ENCODE measurements at regions of chr2 and their contacts with region 1.

Region 1: DNA sequence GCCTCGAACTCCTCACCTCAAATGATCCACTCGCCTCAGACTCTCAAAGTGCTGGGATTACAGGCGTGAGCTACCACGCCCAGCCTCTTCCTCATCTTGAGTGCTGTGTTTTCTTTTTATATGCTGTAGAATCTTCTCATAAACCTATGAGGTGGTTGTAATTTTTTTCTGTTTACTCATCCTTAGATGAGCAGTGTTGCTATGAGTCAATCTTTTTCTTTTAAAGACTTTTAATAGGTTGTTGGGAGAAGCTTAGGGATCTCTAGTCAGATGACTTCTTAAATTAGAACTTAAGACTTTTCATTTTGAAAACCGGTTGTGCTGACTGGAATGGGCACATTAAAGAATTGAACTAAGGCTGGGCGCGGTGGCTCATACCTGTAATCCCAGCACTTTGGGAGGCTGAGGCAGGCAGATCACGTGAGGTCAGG is 8.7 kb upstream of the AAK1 start:
- DNase-seq: peak; percentile 95
- ATAC-seq: peak; percentile 97
- H3K4me3 ChIP-seq: no peak overlapping the region
- H3K27ac ChIP-seq: peak overlapping the region; percentile 83
- H3K4me1 ChIP-seq: peaks cover 20% of the 10 kb centered on the region
- H3K27me3 ChIP-seq: no peaks in the 10 kb centered on the region
- CTCF ChIP-seq: no peak

Region 2: GRCh38 chr2:69667805-69668382 is 15.7 kb after region 1 on chr2:
- CTCF ChIA-PET with region 1: no interaction called
- POLR2A ChIA-PET with region 1: no interaction called
- intact Hi-C with region 1: loop called (anchors 1 kb)
- DNase-seq: peak; percentile 89
- ATAC-seq: peak; percentile 95
- H3K4me3 ChIP-seq: no peak overlapping the region
- H3K27ac ChIP-seq: peak overlapping the region; percentile 45
- H3K4me1 ChIP-seq: peaks cover 15% of the 10 kb centered on the region
- H3K27me3 ChIP-seq: no peaks in the 10 kb centered on the region
- CTCF ChIP-seq: no peak

Region 3: DNA sequence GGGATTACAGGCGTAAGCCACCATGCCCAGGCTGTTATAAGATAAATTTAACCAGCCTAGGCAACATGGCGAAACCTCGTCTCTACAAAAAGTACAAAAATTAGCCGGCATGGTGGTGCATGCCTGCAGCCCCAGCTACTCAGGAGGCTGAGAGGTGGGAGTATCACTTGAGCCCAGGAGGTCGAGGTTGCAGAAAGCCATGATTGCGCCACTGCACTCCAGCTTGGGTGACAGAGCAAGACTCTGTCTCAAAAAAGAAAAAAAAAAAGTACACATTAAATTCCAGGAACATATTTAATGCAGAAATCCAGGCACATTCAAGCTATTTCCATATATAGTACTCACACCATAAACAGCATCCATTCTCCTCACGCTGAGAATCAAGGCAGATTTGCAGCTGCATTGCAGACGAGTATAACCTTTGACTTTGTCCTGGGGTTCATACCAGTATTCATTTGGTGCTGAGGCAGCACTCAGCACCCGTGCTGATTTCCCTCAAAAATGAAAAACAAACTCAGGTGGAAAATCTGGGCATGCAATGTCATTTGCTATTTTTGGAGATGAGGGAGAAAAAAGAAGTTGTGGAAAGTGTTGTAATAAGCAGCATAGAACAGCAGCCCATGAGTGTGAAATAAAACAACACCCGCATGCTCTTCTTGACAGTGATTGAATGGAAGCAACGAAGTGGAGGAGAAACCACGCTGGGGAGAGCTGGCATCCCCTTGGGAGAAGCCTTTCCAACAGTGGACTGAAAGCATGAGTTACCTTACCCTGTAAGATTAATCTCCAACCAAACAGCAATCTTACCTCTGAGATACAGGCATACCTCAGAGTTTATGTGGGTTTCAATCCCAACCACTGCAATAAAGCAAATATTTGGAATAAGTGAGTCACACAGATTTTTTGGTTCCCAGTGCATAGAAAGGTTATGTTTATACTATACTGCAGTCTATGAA is 42.9 kb after region 1 on chr2:
- CTCF ChIA-PET with region 1: no interaction called
- POLR2A ChIA-PET with region 1: no interaction called
- intact Hi-C with region 1: loop called (anchors 2 kb)
- DNase-seq: peak; percentile 97
- ATAC-seq: peak; percentile 85
- H3K4me3 ChIP-seq: peak overlapping the region; percentile 49
- H3K27ac ChIP-seq: peak overlapping the region; percentile 88
- H3K4me1 ChIP-seq: peaks cover 43% of the 10 kb centered on the region
- H3K27me3 ChIP-seq: no peaks in the 10 kb centered on the region
- CTCF ChIP-seq: no peak